Transverse colon (tissue), 4 donors: ENCODE measurements at regions of chr1 and their contacts with region 1.

Region 1: GRCh38 chr1:91940496-91940895 is 8.7 kb upstream of the BRDT start:
- DNase-seq: no peak
- H3K4me3 ChIP-seq: no peak overlapping the region
- H3K27ac ChIP-seq: no peak overlapping the region
- H3K4me1 ChIP-seq: no peaks in the 10 kb centered on the region
- H3K27me3 ChIP-seq: no peaks in the 10 kb centered on the region
- CTCF ChIP-seq: no peak
- EP300 ChIP-seq: no peak
- POLR2A ChIP-seq: no peak

Region 2: GRCh38 chr1:91282695-91283420 is 657.6 kb before region 1 on chr1:
- in situ Hi-C with region 1: loop called in 1 of 4 experiments (anchors 10 kb)
- intact Hi-C with region 1: no loop called
- DNase-seq: peak; percentile 43
- H3K4me3 ChIP-seq: peak overlapping the region in 1 of 4 donors; percentile 15
- H3K27ac ChIP-seq: no peak overlapping the region
- H3K4me1 ChIP-seq: no peaks in the 10 kb centered on the region
- H3K27me3 ChIP-seq: no peaks in the 10 kb centered on the region
- CTCF ChIP-seq: peak; percentile 67 to 83 (median 78)
- EP300 ChIP-seq: no peak
- POLR2A ChIP-seq: no peak

Region 3: GRCh38 chr1:91980663-91981062 is 40.2 kb after region 1 on chr1:
- in situ Hi-C with region 1: no loop called
- intact Hi-C with region 1: loop called (anchors 2 kb)
- DNase-seq: no peak
- H3K4me3 ChIP-seq: no peak overlapping the region
- H3K27ac ChIP-seq: no peak overlapping the region
- H3K4me1 ChIP-seq: no peaks in the 10 kb centered on the region
- H3K27me3 ChIP-seq: no peaks in the 10 kb centered on the region
- CTCF ChIP-seq: no peak
- EP300 ChIP-seq: no peak
- POLR2A ChIP-seq: no peak

Region 4: GRCh38 chr1:92877792-92878191 is 937.3 kb after region 1 on chr1:
- in situ Hi-C with region 1: no loop called
- intact Hi-C with region 1: loop called (anchors 5 kb)
- DNase-seq: no peak
- H3K4me3 ChIP-seq: no peak overlapping the region
- H3K27ac ChIP-seq: peak overlapping the region; percentile 13 to 37 (median 24)
- H3K4me1 ChIP-seq: peaks cover 3 to 32% (median 17%) of the 10 kb centered on the region in 4 donors
- H3K27me3 ChIP-seq: no peaks in the 10 kb centered on the region
- CTCF ChIP-seq: no peak
- EP300 ChIP-seq: no peak
- POLR2A ChIP-seq: no peak